ENCODE measurements at regions of chr7 and their contacts with region 1.

Region 1: DNA sequence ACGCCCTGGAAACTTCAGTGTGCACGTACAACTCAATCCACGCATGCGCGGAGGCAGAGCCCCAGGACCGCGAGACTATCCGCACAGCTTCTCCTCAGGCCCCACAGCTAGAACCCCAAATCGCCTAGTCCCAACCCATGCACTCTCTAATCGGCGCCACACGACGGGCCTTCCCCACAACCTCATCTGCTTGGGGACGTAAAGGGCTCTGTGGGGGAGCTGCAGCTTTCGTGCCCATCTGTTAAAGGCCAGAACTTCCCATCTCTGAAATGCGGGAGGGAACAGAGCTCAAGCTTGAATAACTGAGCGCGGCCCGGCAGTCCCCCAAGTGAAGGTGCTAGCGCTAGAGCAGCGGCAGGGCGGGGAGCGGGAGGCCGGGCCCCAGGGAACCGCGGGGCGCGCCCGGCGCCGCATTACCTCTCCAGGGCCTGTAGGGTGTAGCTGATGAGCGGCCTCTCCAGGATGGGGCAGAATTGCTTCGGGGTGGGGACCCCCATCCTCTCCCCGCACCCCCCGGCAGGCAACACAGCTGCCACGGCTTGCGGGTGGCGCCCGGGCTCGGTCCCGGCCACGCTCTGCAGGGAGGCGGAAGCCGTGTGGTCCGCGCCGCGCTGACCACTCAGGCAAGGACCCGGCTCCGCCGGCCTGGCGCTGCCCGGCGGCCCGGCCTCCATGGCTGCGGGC is 547 bp downstream of the CRPPA start:
- DNase-seq: peak; percentile 87
- H3K4me3 Mint-ChIP-seq: peak overlapping the region; percentile 77
- H3K27ac Mint-ChIP-seq: peak overlapping the region; percentile 92
- H3K4me1 Mint-ChIP-seq: peaks cover 26% of the 10 kb centered on the region
- H3K27me3 Mint-ChIP-seq: no peaks in the 10 kb centered on the region

Region 2: GRCh38 chr7:16431646-16432424 is 11.0 kb after region 1 on chr7:
- CTCF ChIA-PET with region 1: interaction called, 11 read pairs
- POLR2A ChIA-PET with region 1: interaction called, 11 read pairs
- DNase-seq: peak; percentile 22
- H3K4me3 Mint-ChIP-seq: no peak overlapping the region
- H3K27ac Mint-ChIP-seq: no peak overlapping the region
- H3K4me1 Mint-ChIP-seq: no peaks in the 10 kb centered on the region
- H3K27me3 Mint-ChIP-seq: no peaks in the 10 kb centered on the region

Region 3: GRCh38 chr7:16645593-16646471 is 225.0 kb after region 1 on chr7 and contains the starts of genes ANKMY2 and BZW2:
- CTCF ChIA-PET with region 1: interaction called, 3 read pairs
- POLR2A ChIA-PET with region 1: interaction called, 24 read pairs
- DNase-seq: peak; percentile 94
- H3K4me3 Mint-ChIP-seq: peak within 1 kb of the TSS; percentile 90
- H3K27ac Mint-ChIP-seq: peak within 1 kb of the TSS; percentile 86
- H3K4me1 Mint-ChIP-seq: peaks cover 48% of the 10 kb centered on the region
- H3K27me3 Mint-ChIP-seq: no peaks in the 10 kb centered on the region
- total RNA-seq, gene ANKMY2: 11.7 to 12.3 TPM
- total RNA-seq, gene BZW2: 33.4 to 33.6 TPM